HepG2 (cell line): ENCODE measurements at regions of chr3 and their contacts with region 1.

Region 1: DNA sequence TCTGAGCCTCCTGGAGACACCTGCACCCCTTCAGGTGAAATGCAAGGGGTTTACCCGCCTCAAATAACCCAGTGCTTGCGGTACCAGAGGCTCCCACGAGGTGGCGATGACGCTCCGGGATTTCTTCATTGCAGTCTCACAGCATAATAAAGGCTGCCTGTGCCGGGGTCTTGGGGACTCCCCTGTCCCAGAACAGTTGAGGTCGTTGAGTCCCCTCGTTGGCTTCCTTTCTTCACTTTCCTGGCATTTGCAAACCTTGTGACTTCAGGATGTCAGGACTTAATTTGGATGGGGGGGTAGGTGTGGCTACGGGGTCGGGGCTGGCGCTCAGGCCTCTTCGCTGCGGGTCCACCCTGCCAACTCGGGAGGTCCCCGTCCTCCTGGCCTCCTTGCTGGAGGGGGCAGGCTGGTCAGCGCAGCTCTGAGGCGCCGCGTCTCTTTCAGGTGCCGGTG is 1.3 kb downstream of the GNAT1 start:
- DNase-seq: peak; percentile 54
- ATAC-seq: no peak
- H3K4me3 ChIP-seq: no peak overlapping the region
- H3K27ac ChIP-seq: no peak overlapping the region
- H3K4me1 ChIP-seq: peaks cover 54% of the 10 kb centered on the region
- H3K27me3 ChIP-seq: no peaks in the 10 kb centered on the region
- CTCF ChIP-seq: peak; percentile 91
- EP300 ChIP-seq: no peak
- POLR2A ChIP-seq: no peak
- RAD21 ChIP-seq: peak; percentile 94

Region 2: DNA sequence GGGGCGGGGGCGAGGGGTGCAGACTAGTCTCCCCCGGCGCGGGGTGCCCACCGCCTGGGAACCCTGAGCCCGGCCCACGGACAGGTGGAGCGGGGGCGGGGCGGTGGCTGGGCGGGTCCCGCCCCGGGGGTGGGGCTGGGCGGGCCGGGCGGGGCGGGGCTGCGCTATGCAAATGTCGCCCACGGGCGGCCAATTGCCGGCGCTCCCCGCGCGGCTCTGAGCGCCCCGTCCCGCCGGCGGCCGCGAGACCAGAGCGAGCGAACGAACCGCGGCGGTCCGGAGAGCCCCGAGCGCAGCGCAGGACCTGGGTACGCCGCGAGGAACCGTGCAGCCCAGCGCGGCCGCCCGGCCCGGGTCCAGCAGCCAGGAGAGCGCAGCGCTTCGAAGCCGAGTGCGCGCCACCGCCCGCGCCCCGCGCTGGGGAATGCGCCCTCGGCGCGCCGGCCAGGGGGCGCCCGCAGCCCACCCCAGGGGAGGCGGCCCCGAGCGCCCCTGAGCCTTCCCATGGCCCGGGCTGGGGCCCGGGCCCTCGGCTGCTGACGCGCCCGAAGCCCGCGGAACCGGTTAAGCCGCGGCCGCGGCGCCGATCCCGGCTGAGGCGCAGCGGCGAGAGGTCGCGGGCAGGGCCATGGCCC is 37.8 kb before region 1 on chr3 and contains the start of gene SEMA3F:
- CTCF ChIA-PET with region 1: interaction called, 22 read pairs
- POLR2A ChIA-PET with region 1: interaction called, 16 read pairs
- in situ Hi-C with region 1: no loop called
- intact Hi-C with region 1: loop called (anchors 1 kb)
- DNase-seq: peak; percentile 32
- ATAC-seq: peak; percentile 76
- H3K4me3 ChIP-seq: peak within 1 kb of the TSS; percentile 67 to 84 (median 81)
- H3K27ac ChIP-seq: no peak within 1 kb of the TSS
- H3K4me1 ChIP-seq: peaks cover 75% of the 10 kb centered on the region
- H3K27me3 ChIP-seq: peaks cover 0 to 15% of the 10 kb centered on the region in 2 experiments; a peak in 2 of 5 replicates
- CTCF ChIP-seq: peak; percentile 53; the same call in 1 of the 2 replicates
- EP300 ChIP-seq: no peak
- POLR2A ChIP-seq: 0 out of 4 replicates have a peak, but pooled peaks of 1 of the 2 experiments have one; percentile 32
- RAD21 ChIP-seq: peak; percentile 97
- total RNA-seq, gene SEMA3F: 3.6 and 7.6 TPM in 2 replicates

Region 3: DNA sequence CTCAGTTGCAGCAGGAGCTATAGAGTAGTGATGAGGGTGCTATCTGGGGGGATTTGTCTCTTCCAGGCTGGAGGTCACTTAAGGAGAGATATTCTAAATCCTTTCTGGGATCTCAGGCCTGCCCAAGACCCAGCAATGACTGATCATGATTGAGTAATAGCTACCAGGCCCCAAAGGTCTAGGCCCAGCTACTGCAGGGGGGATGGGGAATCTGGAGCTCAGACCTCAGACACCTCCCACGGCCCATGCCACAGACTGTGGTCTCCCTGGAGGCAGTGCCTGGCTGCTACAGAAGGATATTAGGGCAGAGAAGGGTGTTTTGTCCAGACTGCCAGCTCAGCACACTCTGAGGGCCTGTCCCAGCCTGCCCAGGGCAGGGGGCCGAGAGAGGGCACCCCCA is 19.2 kb after region 1 on chr3:
- CTCF ChIA-PET with region 1: interaction called, 15 read pairs
- POLR2A ChIA-PET with region 1: interaction called, 844 read pairs
- in situ Hi-C with region 1: no loop called
- intact Hi-C with region 1: loop called (anchors 1 kb)
- DNase-seq: no peak
- ATAC-seq: no peak
- H3K4me3 ChIP-seq: peak overlapping the region in 1 of 3 experiments; percentile 17; a peak in 1 of 6 replicates
- H3K27ac ChIP-seq: peak overlapping the region; percentile 99
- H3K4me1 ChIP-seq: peaks cover 74% of the 10 kb centered on the region
- H3K27me3 ChIP-seq: no peaks in the 10 kb centered on the region
- CTCF ChIP-seq: no peak
- EP300 ChIP-seq: no peak
- POLR2A ChIP-seq: no peak
- RAD21 ChIP-seq: no peak

Region 4: GRCh38 chr3:50235716-50236496 is 43.2 kb after region 1 on chr3 and contains the start of gene GNAI2:
- CTCF ChIA-PET with region 1: interaction called, 4 read pairs
- POLR2A ChIA-PET with region 1: interaction called, 55 read pairs
- in situ Hi-C with region 1: no loop called
- intact Hi-C with region 1: no loop called
- DNase-seq: peak; percentile 94
- ATAC-seq: peak; percentile 93
- H3K4me3 ChIP-seq: peak within 1 kb of the TSS; percentile 85 to 93 (median 87)
- H3K27ac ChIP-seq: peak within 1 kb of the TSS; percentile 61
- H3K4me1 ChIP-seq: peaks cover 59% of the 10 kb centered on the region
- H3K27me3 ChIP-seq: no peaks in the 10 kb centered on the region; a peak in 1 of 5 replicates
- CTCF ChIP-seq: no peak; the same call in 1 of the 2 replicates
- EP300 ChIP-seq: no peak
- POLR2A ChIP-seq: peak; percentile 66 to 92
- RAD21 ChIP-seq: peak; percentile 51
- total RNA-seq, gene GNAI2: 34.5 and 51.1 TPM in 2 replicates

Region 5: GRCh38 chr3:50267280-50267913 is 74.7 kb after region 1 on chr3:
- CTCF ChIA-PET with region 1: interaction called, 4 read pairs
- POLR2A ChIA-PET with region 1: interaction called, 39 read pairs
- in situ Hi-C with region 1: loop called (anchors 10 kb)
- intact Hi-C with region 1: loop called (anchors 5 kb)
- DNase-seq: no peak
- ATAC-seq: no peak
- H3K4me3 ChIP-seq: peak overlapping the region; percentile 9 to 83 (median 44); a peak in 5 of 6 replicates
- H3K27ac ChIP-seq: peak overlapping the region; percentile 88
- H3K4me1 ChIP-seq: peaks cover 88% of the 10 kb centered on the region
- H3K27me3 ChIP-seq: no peaks in the 10 kb centered on the region; a peak in 1 of 5 replicates
- CTCF ChIP-seq: no peak
- EP300 ChIP-seq: no peak
- POLR2A ChIP-seq: no peak
- RAD21 ChIP-seq: no peak

Region 6: DNA sequence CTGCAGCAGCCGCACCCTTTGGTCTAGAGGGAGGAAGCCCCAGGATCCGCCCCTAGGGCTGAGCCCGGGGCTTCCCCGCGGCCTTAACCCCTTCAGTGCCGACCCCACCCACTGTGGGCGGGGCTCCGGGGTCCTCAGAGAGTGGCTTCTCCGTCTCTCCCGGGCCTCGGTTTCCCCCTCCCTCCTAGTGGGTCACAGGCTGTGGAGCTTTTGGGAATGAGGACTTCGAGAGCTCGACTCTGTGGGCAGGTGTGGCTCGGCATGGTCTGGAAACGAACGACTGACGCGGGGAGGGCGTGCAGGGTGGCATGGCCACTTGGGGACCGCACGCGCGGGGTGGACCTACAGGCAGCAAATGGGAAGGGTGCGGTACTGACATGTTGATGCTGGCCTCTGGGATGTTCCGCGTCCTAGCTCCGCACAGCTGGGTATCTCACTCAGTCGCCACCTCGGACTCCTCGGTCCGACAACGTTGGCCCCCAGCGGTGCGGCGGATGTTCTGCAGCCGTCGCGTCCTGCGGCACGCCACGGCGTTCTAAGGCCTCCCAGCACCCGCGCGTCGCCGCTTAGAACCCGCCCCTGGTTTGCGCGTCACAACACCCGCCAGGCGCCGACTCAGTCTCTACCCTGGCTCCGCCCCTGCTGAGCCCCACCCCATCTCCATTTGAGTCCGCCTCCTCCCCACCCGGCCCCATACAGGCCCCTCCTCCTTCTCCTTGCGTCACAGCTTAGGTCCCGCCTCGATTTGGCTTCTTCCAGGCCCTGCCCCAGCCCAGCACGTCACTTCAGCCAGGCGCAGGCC is 106.3 kb after region 1 on chr3 and contains the starts of genes HYAL3 and NAA80:
- CTCF ChIA-PET with region 1: no interaction called
- POLR2A ChIA-PET with region 1: interaction called, 10 read pairs
- in situ Hi-C with region 1: no loop called
- intact Hi-C with region 1: no loop called
- DNase-seq: no peak
- ATAC-seq: peak; percentile 53
- H3K4me3 ChIP-seq: peak within 1 kb of the TSS; percentile 66 to 91 (median 89)
- H3K27ac ChIP-seq: peak within 1 kb of the TSS; percentile 87
- H3K4me1 ChIP-seq: peaks cover 52% of the 10 kb centered on the region
- H3K27me3 ChIP-seq: no peaks in the 10 kb centered on the region; a peak in 1 of 5 replicates
- CTCF ChIP-seq: peak; percentile 54
- EP300 ChIP-seq: no peak
- POLR2A ChIP-seq: peak in 1 of 2 experiments; percentile 79; a peak in 2 of 4 replicates
- RAD21 ChIP-seq: peak; percentile 67; the same call in 1 of the 2 replicates
- total RNA-seq, gene HYAL3: 5.5 and 5.9 TPM in 2 replicates
- total RNA-seq, gene NAA80: 1.5 and 3.4 TPM in 2 replicates

Region 7: GRCh38 chr3:50314342-50314741 is 121.6 kb after region 1 on chr3:
- CTCF ChIA-PET with region 1: no interaction called
- POLR2A ChIA-PET with region 1: no interaction called
- in situ Hi-C with region 1: no loop called
- intact Hi-C with region 1: no loop called
- DNase-seq: no peak
- ATAC-seq: no peak; the same call in 2 of the 3 replicates
- H3K4me3 ChIP-seq: no peak overlapping the region
- H3K27ac ChIP-seq: peak overlapping the region; percentile 27
- H3K4me1 ChIP-seq: peaks cover 42% of the 10 kb centered on the region
- H3K27me3 ChIP-seq: no peaks in the 10 kb centered on the region
- CTCF ChIP-seq: no peak
- EP300 ChIP-seq: no peak
- POLR2A ChIP-seq: no peak
- RAD21 ChIP-seq: no peak